Caco-2 (cell line): ENCODE measurements at regions of chr17 and their contacts with region 1.

Region 1: GRCh38 chr17:45197555-45198334 is 23.9 kb upstream of the FMNL1 start:
- DNase-seq: peak; percentile 96 to 99
- H3K4me3 ChIP-seq: no peak overlapping the region
- H3K4me3 Mint-ChIP-seq: no peak overlapping the region
- H3K27ac Mint-ChIP-seq: peak overlapping the region; percentile 85
- H3K4me1 ChIP-seq: peaks cover 33% of the 10 kb centered on the region
- H3K4me1 Mint-ChIP-seq: peaks cover 14% of the 10 kb centered on the region
- H3K27me3 ChIP-seq: no peaks in the 10 kb centered on the region
- H3K27me3 Mint-ChIP-seq: no peaks in the 10 kb centered on the region
- CTCF ChIP-seq: peak; percentile 99 to 100

Region 2: DNA sequence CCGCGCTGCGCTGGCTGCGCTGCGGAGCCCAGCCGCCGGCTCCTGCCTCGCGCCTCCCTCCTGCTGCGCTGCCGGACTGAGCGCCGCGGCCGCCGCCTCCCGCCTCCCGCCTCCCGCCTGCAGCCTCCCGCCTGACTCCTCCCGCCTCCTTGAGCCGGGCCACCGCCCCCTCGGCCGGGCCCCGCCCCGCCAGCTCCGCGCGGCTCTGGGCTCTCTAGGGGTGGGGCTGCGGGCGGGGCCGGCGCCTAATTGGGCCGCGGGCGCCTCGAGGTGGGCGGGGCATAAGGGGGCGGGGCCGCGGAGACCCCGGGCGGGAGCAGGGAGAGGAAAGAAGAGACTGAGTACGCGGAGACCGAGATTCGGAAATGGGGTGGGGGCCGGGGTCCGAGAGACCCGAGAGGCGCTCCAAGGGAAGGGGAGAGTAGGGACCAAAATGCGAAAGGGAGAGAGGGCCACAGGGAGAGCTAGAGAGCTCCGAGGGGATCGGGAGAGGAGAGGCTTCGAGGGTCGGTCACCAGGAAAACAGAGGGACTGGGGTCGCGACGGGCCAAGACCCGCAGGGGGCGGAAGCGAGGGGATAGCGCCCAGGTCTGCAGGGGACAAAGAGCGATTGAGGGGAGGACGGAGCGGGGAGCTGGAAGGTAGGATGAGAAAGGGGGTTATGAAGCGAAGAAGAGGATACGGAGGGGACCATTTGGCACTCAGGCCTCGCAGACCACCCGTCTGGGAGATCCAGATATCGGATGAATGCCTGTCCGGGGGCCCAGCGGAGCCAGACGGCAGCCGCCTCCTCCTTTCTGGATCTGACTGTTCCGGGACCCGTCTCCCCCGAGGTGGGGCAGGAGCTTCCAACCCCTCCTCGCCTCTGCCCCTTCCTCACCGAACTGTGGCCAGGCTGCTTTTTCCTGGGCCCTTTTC is 229.3 kb before region 1 on chr17 and contains the start of gene C1QL1:
- CTCF ChIA-PET with region 1: no interaction called
- POLR2A ChIA-PET with region 1: no interaction called
- intact Hi-C with region 1: no loop called
- DNase-seq: peak; percentile 93 to 96
- H3K4me3 ChIP-seq: peak within 1 kb of the TSS; percentile 52
- H3K4me3 Mint-ChIP-seq: peak within 1 kb of the TSS; percentile 77
- H3K27ac Mint-ChIP-seq: no peak within 1 kb of the TSS
- H3K4me1 ChIP-seq: peaks cover 6% of the 10 kb centered on the region
- H3K4me1 Mint-ChIP-seq: no peaks in the 10 kb centered on the region
- H3K27me3 ChIP-seq: peaks cover 1% of the 10 kb centered on the region; the same call in 1 of the 2 replicates
- H3K27me3 Mint-ChIP-seq: peaks cover 15% of the 10 kb centered on the region
- CTCF ChIP-seq: peak; percentile 30 to 63
- total RNA-seq, gene C1QL1: 2.5 and 5.2 TPM in 2 replicates

Region 3: GRCh38 chr17:45155029-45155428 is 42.7 kb before region 1 on chr17:
- CTCF ChIA-PET with region 1: interaction called, 161 read pairs
- POLR2A ChIA-PET with region 1: interaction called, 84 read pairs
- intact Hi-C with region 1: no loop called
- DNase-seq: no peak
- H3K4me3 ChIP-seq: no peak overlapping the region
- H3K4me3 Mint-ChIP-seq: no peak overlapping the region
- H3K27ac Mint-ChIP-seq: no peak overlapping the region
- H3K4me1 ChIP-seq: peaks cover 50% of the 10 kb centered on the region
- H3K4me1 Mint-ChIP-seq: peaks cover 30% of the 10 kb centered on the region
- H3K27me3 ChIP-seq: no peaks in the 10 kb centered on the region
- H3K27me3 Mint-ChIP-seq: no peaks in the 10 kb centered on the region
- CTCF ChIP-seq: no peak

Region 4: GRCh38 chr17:45161019-45161825 is 36.5 kb before region 1 on chr17:
- CTCF ChIA-PET with region 1: interaction called, 45 read pairs
- POLR2A ChIA-PET with region 1: interaction called, 34 read pairs
- intact Hi-C with region 1: loop called (anchors 1 kb)
- DNase-seq: peak; percentile 99 to 100
- H3K4me3 ChIP-seq: peak overlapping the region; percentile 61
- H3K4me3 Mint-ChIP-seq: peak overlapping the region; percentile 77
- H3K27ac Mint-ChIP-seq: peak overlapping the region; percentile 99
- H3K4me1 ChIP-seq: peaks cover 45% of the 10 kb centered on the region
- H3K4me1 Mint-ChIP-seq: peaks cover 27% of the 10 kb centered on the region
- H3K27me3 ChIP-seq: no peaks in the 10 kb centered on the region
- H3K27me3 Mint-ChIP-seq: no peaks in the 10 kb centered on the region
- CTCF ChIP-seq: no peak

Region 5: GRCh38 chr17:45377401-45377800 is 179.7 kb after region 1 on chr17:
- CTCF ChIA-PET with region 1: no interaction called
- POLR2A ChIA-PET with region 1: no interaction called
- intact Hi-C with region 1: no loop called
- DNase-seq: no peak
- H3K4me3 ChIP-seq: no peak overlapping the region
- H3K4me3 Mint-ChIP-seq: no peak overlapping the region
- H3K27ac Mint-ChIP-seq: no peak overlapping the region
- H3K4me1 ChIP-seq: peaks cover 27% of the 10 kb centered on the region
- H3K4me1 Mint-ChIP-seq: peaks cover 16% of the 10 kb centered on the region
- H3K27me3 ChIP-seq: no peaks in the 10 kb centered on the region
- H3K27me3 Mint-ChIP-seq: no peaks in the 10 kb centered on the region
- CTCF ChIP-seq: no peak